MCF 10A (cell line): ENCODE measurements at regions of chr19 and their contacts with region 1.

Region 1: DNA sequence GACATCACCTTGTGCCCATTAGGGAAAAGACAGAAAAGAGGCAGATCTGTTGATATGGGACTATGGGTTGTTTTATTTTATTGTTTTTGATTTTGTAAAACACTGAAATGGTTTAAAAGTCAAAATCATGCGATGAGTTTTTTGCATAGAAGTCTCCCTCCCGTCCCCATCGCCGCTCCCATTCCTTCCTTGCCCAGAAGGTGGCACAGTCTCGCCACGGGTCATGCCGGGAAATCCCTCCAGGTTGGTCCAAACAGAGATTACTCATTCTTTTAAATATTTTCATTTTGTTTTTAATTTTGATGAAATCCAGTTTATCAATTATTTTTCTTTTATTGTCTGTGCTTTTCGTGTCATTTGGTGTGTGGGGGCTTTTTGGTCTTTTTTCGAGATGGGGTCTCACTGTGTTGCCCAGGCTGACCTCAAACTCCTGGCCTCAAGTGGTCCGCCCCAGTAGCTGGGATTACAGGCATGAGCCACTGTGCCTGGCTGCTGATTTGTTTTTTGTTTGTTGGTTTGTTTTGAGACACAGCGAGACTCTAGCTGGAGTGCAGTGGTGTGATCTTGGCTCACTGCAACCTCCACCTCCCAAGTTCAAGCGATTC is 9.2 kb downstream of the PGPEP1 start:
- DNase-seq: peak; percentile 75
- H3K4me3 Mint-ChIP-seq: no peak overlapping the region
- H3K27ac Mint-ChIP-seq: no peak overlapping the region
- H3K4me1 Mint-ChIP-seq: peaks cover 25% of the 10 kb centered on the region
- H3K27me3 Mint-ChIP-seq: peaks cover 12% of the 10 kb centered on the region
- CTCF ChIP-seq: peak; percentile 77

Region 2: DNA sequence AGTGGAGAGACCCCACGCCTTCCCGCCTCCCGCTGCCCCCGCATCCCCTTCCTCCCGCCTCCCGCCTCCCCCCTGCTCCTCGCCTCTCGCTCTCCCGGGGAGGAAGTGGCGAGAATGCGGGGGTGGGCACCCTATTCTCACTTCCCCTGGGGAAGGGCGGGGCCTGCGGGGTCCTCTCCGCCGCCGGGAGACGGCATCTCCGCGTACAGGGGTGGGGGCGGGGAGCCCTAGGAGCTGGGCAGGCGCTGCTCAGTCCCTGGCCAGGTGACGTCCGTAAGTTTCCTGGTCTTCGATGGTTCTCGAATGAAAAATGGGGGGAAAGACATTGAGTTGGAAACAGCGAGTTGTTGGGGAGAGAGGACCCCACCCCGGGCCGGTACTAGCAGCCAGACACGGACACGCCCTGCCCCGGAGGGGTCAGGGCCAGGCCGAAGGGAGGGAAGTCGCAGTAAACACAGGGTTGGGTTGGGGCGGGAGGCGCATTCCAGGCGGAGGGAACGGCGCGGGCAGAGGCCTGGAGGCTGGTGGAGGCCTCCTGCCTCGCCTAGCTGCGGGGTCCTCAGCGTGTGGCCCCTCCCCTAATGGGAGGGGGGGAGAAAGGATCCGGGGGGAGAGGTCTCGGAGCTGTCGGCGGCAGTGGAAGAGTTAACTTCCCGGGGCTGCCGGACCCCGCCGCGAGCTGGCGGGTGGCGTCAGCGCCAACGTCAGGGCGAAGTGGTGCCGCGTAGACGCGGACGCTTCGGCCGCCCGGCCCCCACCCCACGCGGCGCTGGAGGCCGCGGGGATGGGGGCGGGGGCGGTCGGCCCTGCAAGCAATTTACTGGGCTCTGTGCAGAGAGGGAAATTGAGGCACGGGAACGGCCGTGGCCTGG is 57.8 kb before region 1 on chr19:
- CTCF ChIA-PET with region 1: no interaction called
- POLR2A ChIA-PET with region 1: no interaction called
- intact Hi-C with region 1: no loop called
- DNase-seq: peak; percentile 70
- H3K4me3 Mint-ChIP-seq: peak overlapping the region; percentile 78
- H3K27ac Mint-ChIP-seq: peak overlapping the region; percentile 97
- H3K4me1 Mint-ChIP-seq: peaks cover 19% of the 10 kb centered on the region
- H3K27me3 Mint-ChIP-seq: no peaks in the 10 kb centered on the region
- CTCF ChIP-seq: no peak

Region 3: GRCh38 chr19:18364826-18365528 is 15.4 kb after region 1 on chr19:
- CTCF ChIA-PET with region 1: interaction called, 20 read pairs
- POLR2A ChIA-PET with region 1: interaction called, 4 read pairs
- intact Hi-C with region 1: no loop called
- DNase-seq: peak; percentile 97
- H3K4me3 Mint-ChIP-seq: peak overlapping the region; percentile 25
- H3K27ac Mint-ChIP-seq: peak overlapping the region; percentile 97
- H3K4me1 Mint-ChIP-seq: peaks cover 19% of the 10 kb centered on the region
- H3K27me3 Mint-ChIP-seq: no peaks in the 10 kb centered on the region
- CTCF ChIP-seq: no peak

Region 4: GRCh38 chr19:18408053-18408476 is 58.4 kb after region 1 on chr19:
- CTCF ChIA-PET with region 1: interaction called, 118 read pairs
- POLR2A ChIA-PET with region 1: interaction called, 3 read pairs
- intact Hi-C with region 1: loop called (anchors 1 kb)
- DNase-seq: no peak
- H3K4me3 Mint-ChIP-seq: no peak overlapping the region
- H3K27ac Mint-ChIP-seq: no peak overlapping the region
- H3K4me1 Mint-ChIP-seq: peaks cover 6% of the 10 kb centered on the region
- H3K27me3 Mint-ChIP-seq: no peaks in the 10 kb centered on the region
- CTCF ChIP-seq: no peak

Region 5: DNA sequence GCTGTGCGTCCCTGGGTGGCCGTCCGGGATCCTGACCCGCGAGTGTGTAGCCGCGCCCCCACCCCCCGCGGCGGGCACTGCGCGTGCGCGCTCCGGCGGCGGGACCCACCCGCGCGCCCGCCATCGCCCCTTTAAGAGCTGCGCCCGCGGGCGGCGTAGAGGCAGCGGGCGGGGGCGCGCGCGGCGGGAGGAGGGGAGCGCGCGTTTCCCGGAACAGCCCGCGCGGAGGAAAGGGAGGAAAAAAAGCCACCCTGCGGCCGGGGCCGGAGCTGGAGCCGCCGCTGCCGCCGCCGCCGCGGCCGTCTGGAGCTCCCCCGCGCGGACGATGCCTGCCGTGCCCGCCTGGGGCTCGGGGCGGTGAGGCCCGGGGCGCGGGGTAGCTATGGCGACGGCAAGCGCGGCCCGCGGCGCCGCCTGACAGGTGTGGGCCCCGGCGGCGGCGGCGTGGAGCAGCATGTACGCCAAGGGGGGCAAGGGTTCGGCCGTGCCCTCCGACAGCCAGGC is 69.6 kb after region 1 on chr19 and contains the start of gene SSBP4:
- CTCF ChIA-PET with region 1: interaction called, 118 read pairs
- POLR2A ChIA-PET with region 1: interaction called, 4 read pairs
- intact Hi-C with region 1: no loop called
- DNase-seq: peak; percentile 80
- H3K4me3 Mint-ChIP-seq: peak within 1 kb of the TSS; percentile 77
- H3K27ac Mint-ChIP-seq: peak within 1 kb of the TSS; percentile 72
- H3K4me1 Mint-ChIP-seq: peaks cover 29% of the 10 kb centered on the region
- H3K27me3 Mint-ChIP-seq: no peaks in the 10 kb centered on the region
- CTCF ChIP-seq: peak; percentile 51
- total RNA-seq, gene SSBP4: 22.3 and 26.3 TPM in 2 replicates